ENCODE measurements at regions of chr1 and their contacts with region 1.

Region 1: DNA sequence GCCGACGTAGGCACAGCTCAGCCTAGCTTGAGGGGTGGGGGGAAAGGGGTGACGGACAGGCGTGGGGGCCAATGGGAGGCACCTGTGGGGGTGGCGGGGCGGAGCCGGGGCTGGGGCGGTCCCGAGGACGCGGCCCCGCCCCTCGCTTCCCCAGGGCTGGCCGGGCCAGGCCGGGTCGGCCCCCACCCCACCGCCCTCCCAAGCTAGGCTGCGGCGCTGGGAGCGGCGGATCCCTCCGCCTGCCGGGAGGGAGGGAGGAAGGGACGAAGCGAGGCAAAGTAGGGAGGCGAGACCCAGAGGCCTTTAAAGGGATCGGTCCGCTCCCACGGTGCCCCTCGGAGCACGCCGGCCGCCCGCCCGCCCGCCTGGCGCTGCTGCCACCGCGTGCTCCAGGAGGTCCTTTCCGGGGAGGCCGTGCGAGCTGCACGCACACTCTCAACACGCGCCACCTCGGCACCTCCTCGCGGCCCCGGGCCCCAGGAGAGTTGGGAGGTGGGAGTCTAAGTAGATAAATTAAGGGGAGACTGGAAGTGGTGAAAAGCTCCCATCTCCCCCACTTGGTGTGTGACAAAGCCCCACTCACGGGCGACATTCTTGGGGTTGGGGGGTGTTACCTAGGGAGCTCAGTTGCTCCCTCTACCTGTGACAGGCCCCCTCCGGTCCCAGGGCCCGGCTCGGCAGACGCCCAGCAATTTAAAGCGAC is 373 bp upstream of the MEF2D start:
- DNase-seq: peak; percentile 96
- ATAC-seq: peak; percentile 85

Region 2: DNA sequence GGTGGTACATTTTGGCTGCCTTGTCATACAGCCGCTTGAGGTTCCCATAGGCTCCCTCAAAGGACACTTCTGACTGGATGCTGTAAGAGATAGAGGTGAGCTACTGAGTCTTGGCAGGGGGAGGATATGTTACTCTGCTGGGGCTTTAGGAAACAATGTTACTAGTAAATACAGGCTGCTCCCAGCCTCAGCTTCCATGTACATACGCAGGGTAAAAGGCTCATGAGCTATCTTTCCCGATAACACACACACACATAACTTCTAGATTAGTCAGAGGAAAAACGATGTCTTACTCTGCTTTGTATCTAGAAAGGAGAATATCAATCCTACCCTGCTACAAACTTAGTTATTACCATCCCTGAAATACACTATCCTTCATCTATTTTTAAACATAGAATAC is 232.6 kb before region 1 on chr1:
- intact Hi-C with region 1: no loop called
- DNase-seq: no peak
- ATAC-seq: no peak

Region 3: DNA sequence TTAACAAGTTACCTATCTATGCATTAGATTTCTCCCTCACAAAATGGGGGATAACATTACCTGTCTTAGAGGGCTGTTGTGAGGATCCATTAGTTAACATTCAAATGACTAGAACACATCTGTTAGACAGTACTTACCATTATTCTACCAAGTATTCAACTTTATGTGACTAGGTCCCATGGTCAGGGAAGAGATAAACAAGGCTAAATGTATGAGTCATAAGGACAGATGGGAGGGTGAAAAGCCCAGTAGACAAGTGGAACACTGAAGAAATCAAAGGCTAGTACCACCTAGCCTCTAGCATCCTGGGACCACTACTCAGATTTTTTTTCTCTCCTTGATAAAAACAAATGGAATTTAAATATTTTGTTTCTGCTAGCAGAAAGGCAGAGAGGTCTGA is 192.9 kb before region 1 on chr1:
- intact Hi-C with region 1: no loop called
- DNase-seq: no peak
- ATAC-seq: no peak

Region 4: DNA sequence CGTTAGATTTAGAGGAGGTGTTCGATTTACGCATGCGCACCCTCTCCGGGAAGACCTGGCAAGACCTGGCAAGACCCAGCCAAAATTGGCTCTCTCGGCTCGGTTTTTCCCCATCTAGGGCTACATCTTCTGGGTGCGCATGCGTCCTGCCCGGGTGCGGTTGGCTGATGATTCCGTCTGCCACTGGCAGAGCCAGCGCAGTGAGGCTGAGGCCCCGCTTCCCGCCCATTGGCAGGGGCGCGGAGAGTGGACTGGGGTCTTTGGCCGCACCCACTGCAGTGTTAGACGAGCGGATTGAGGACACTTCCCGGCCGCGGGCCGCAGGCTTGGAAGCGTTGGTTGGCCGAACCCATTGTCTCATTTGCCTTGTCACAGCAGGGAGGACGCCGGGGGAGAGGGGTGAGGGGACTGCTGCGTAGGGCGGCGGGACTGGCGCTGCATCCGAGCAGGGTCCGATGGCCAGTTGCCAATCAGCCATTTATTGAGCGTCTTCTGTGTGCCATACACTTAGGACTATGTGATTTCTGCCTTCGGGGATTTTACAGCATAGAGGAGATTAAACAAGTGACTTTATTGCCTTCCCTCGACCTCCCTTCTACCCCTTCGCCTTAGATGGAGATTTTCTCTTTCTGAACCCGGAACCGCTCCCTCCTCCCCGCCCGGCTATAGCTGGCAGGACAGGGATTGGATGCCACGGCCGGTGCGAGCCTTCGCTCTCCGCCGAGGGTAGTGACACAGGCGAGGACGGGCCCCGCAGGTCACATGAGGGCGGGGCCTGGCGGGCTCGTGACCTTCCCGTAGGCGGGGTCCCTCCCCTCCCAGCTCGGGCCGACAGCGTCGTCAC is 44.1 kb before region 1 on chr1:
- intact Hi-C with region 1: loop called (anchors 1 kb)
- DNase-seq: peak; percentile 98
- ATAC-seq: peak; percentile 95

Region 5: GRCh38 chr1:156591432-156592157 is 90.6 kb after region 1 on chr1 and contains the start of gene NAXE:
- intact Hi-C with region 1: loop called (anchors 5 kb)
- DNase-seq: peak; percentile 88
- ATAC-seq: peak; percentile 97
- total RNA-seq, gene NAXE: 116 TPM